Activated naive CD4-positive, alpha-beta T cell treated with anti-CD3 and anti-CD28 coated beads for 36 hours (primary cell): ENCODE measurements at regions of chr12 and their contacts with region 1.

Region 1: DNA sequence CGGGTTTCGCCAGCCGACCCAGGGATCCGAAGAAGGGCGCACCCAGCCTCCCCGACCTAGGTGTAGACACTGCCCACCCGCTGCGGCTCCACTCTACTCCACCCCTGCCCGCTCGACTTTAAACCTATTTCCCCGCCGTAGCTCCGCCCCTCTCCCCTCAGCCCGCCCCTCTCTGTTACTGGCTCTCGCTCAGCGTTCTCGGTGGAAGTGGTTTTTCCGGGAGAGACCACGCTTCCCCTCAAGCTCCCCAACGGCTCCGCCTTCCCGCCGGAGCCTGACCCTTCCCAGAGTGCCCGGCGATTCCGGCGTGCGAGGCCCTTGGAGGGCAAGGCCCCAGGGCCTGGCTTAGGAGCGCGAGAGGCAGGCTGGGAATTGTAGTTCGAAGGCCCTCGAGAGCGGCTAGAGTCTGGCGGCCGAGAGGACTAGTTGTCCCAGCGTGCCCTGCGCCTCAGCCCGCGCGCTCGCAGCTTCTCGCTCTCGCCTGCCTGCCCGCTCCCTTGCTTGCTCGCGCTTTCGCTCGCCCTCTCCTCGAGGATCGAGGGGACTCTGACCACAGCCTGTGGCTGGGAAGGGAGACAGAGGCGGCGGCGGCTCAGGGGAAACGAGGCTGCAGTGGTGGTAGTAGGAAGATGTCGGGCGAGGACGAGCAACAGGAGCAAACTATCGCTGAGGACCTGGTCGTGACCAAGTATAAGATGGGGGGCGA is at the start of gene PA2G4:
- DNase-seq: peak; percentile 99
- H3K4me3 Mint-ChIP-seq: peak within 1 kb of the TSS; percentile 99
- H3K27ac Mint-ChIP-seq: peak within 1 kb of the TSS; percentile 99
- H3K4me1 Mint-ChIP-seq: peaks cover 38% of the 10 kb centered on the region
- H3K27me3 Mint-ChIP-seq: no peaks in the 10 kb centered on the region
- total RNA-seq, gene PA2G4: 398 to 411 TPM

Region 2: GRCh38 chr12:55696796-55697462 is 407.3 kb before region 1 on chr12:
- CTCF ChIA-PET with region 1: no interaction called
- intact Hi-C with region 1: no loop called
- DNase-seq: no peak
- H3K4me3 Mint-ChIP-seq: no peak overlapping the region
- H3K27ac Mint-ChIP-seq: no peak overlapping the region
- H3K4me1 Mint-ChIP-seq: no peaks in the 10 kb centered on the region
- H3K27me3 Mint-ChIP-seq: no peaks in the 10 kb centered on the region

Region 3: DNA sequence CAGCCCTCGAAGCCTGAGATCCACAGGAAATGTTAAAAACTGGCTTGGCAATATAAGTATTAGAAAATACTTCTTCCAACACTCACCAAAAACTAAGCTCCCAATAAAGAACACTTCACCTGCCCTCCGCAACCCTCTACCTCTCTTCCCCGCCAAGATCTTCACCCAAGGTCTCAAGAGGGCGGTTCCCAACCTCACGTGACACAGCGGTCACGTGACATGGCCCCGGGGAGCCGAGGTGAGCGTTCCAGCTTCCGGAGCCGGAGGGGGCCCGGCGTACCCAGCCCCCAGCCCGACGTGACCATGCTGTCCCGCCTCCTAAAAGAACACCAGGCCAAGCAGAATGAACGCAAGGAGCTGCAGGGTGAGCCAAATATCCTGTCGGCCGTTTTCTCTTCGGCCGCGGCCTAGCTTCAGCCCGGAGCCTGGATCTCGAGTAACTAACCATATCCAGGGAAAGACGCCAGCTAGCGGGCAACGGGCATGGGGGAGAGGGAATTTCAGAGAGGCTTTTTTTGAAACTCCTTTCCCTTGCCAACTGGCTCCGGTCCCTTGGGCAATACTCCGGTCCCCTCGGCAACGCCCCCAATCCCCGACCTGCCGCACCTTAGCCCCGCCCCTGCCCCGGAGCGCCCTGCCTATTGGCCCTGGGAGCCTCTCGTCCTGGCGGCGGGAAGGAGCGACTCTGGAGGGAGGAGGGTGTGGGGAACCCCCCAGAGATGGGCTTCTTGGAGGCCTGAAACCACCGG is 388.3 kb before region 1 on chr12 and contains the start of gene BLOC1S1:
- CTCF ChIA-PET with region 1: no interaction called
- intact Hi-C with region 1: loop called (anchors 1 kb)
- DNase-seq: peak; percentile 96
- H3K4me3 Mint-ChIP-seq: peak within 1 kb of the TSS; percentile 92
- H3K27ac Mint-ChIP-seq: peak within 1 kb of the TSS; percentile 91
- H3K4me1 Mint-ChIP-seq: peaks cover 28% of the 10 kb centered on the region
- H3K27me3 Mint-ChIP-seq: peaks cover 3% of the 10 kb centered on the region
- total RNA-seq, gene BLOC1S1: 118 to 124 TPM

Region 4: GRCh38 chr12:55817346-55818139 is 286.7 kb before region 1 on chr12 and contains the starts of genes ORMDL2 and SARNP:
- CTCF ChIA-PET with region 1: no interaction called
- intact Hi-C with region 1: loop called (anchors 1 kb)
- DNase-seq: peak; percentile 99
- H3K4me3 Mint-ChIP-seq: no peak within 1 kb of the TSS
- H3K27ac Mint-ChIP-seq: no peak within 1 kb of the TSS
- H3K4me1 Mint-ChIP-seq: peaks cover 43% of the 10 kb centered on the region
- H3K27me3 Mint-ChIP-seq: no peaks in the 10 kb centered on the region
- total RNA-seq, gene ORMDL2: 23.8 to 26.4 TPM
- total RNA-seq, gene SARNP: 100 to 101 TPM

Region 5: DNA sequence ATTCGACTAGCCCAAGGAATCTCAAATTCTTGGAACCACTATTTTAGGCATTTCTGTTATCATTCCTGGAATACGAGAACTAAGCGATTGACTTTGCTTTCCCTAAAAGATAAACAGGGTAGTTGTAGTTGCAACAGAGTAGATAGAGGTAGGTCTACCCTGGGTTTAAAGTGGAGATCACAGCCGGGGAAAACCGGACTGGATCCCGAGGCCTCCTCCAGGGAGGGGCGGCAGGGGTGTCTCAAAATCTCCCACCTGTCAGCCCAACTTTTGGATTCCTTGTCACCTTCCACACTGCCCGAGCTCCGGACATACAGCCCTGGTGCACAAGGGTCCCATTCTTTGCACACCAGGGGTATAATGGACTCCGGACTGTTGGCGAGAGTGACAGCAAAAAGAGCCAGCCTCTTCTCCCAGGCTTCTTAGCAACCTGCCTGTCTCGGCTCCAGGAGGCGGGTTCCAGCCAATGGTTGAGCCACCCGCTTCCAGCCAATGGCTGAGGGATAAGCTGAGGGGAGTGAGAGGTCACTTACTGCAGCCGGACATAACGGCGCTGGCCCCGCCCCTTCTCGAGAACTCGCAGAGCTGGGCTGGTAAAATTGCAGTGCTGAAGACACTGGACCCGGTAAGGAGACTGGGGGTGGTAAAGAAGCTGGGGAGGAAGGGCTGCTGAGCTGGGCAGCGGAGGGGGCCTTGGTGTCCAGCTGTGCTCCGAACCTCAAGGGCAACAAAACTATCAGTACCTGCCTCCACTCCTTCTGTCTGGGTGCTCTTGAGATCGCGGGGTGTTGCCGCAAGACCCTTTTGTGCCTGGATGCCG is 107.3 kb before region 1 on chr12 and contains the start of gene SUOX:
- CTCF ChIA-PET with region 1: interaction called, 7 read pairs
- intact Hi-C with region 1: loop called (anchors 5 kb)
- DNase-seq: peak; percentile 72
- H3K4me3 Mint-ChIP-seq: peak within 1 kb of the TSS; percentile 72
- H3K27ac Mint-ChIP-seq: peak within 1 kb of the TSS; percentile 36
- H3K4me1 Mint-ChIP-seq: peaks cover 20% of the 10 kb centered on the region
- H3K27me3 Mint-ChIP-seq: peaks cover 18% of the 10 kb centered on the region
- total RNA-seq, gene SUOX: 1.7 to 2.2 TPM

Region 6: DNA sequence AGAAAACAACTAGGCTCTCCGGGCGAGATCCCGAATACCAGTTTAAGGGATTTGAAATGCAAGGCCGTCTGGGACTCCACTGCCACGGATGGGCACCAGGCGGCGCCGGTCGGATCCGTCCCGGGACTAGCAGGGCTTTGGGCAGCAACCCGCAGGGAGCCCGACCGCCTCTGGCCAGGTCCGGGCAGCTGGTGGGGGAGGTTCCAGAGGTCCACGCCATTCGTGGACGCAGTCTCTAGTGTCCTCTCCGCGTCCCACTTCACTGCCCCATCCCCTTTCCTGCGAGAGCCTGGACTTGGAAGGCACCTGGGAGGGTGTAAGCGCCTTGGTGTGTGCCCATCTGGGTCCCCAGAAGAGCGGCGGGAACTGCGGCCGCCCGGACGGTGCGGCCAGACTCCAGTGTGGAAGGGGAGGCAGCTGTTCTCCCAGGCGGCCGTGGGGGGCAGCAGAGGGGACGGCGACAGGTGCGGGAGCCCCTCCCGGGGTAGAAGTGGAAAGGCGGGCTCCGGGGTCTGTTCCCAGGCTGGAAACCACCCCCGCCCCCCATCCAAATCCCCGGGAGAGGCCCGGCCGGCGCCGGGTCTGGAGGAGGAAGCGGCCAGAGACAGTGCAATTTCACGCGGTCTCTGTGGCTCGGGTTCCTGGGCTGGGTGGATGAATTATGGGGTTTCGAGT is 25.1 kb before region 1 on chr12:
- CTCF ChIA-PET with region 1: interaction called, 4 read pairs
- intact Hi-C with region 1: loop called (anchors 1 kb)
- DNase-seq: peak; percentile 70
- H3K4me3 Mint-ChIP-seq: peak overlapping the region; percentile 76
- H3K27ac Mint-ChIP-seq: no peak overlapping the region
- H3K4me1 Mint-ChIP-seq: peaks cover 12% of the 10 kb centered on the region
- H3K27me3 Mint-ChIP-seq: peaks cover 17% of the 10 kb centered on the region

Region 7: DNA sequence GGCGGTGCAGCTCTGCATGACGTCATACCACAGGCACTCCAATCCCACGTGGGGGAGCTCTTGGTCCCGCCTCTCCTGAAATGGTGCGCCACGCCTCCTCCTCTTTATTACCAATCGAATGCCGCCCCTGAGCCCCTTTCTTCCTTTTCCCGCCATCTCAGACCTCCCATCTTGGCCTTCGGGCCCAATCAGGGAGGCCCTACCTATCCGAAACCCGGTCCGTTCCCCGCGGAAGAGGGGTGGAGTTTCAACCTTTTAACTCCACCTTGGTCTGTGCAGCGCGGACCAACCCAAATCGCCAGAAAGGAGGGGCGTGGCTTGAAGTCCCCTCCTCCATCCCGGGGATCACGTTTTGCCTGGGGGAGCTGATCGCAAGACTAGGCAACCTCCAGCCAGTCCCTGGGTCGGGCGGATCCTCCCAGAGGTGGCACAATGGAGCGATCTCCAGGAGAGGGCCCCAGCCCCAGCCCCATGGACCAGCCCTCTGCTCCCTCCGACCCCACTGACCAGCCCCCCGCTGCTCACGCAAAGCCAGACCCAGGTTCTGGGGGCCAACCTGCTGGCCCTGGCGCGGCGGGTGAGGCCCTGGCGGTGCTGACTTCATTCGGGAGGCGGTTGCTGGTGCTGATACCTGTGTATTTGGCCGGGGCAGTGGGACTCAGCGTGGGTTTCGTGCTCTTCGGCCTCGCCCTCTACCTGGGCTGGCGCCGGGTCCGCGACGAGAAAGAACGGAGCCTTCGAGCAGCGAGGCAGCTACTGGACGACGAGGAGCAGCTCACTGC is 23.8 kb after region 1 on chr12 and contains the start of gene ESYT1:
- CTCF ChIA-PET with region 1: interaction called, 3 read pairs
- intact Hi-C with region 1: loop called (anchors 2 kb)
- DNase-seq: peak; percentile 99
- H3K4me3 Mint-ChIP-seq: peak within 1 kb of the TSS; percentile 91
- H3K27ac Mint-ChIP-seq: peak within 1 kb of the TSS; percentile 86
- H3K4me1 Mint-ChIP-seq: peaks cover 55% of the 10 kb centered on the region
- H3K27me3 Mint-ChIP-seq: no peaks in the 10 kb centered on the region
- total RNA-seq, gene ESYT1: 87.4 to 88.9 TPM

Region 8: GRCh38 chr12:56189176-56189917 is 85.1 kb after region 1 on chr12 and contains the start of gene SMARCC2:
- CTCF ChIA-PET with region 1: interaction called, 12 read pairs
- intact Hi-C with region 1: no loop called
- DNase-seq: peak; percentile 93
- H3K4me3 Mint-ChIP-seq: peak within 1 kb of the TSS; percentile 95
- H3K27ac Mint-ChIP-seq: peak within 1 kb of the TSS; percentile 92
- H3K4me1 Mint-ChIP-seq: peaks cover 33% of the 10 kb centered on the region
- H3K27me3 Mint-ChIP-seq: no peaks in the 10 kb centered on the region
- total RNA-seq, gene SMARCC2: 75.8 to 79.0 TPM